Activated CD4-positive, alpha-beta T cell treated with anti-CD3 and anti-CD28 coated beads for 36 hours (primary cell): ENCODE measurements at regions of chr10 and their contacts with region 1.

Region 1: DNA sequence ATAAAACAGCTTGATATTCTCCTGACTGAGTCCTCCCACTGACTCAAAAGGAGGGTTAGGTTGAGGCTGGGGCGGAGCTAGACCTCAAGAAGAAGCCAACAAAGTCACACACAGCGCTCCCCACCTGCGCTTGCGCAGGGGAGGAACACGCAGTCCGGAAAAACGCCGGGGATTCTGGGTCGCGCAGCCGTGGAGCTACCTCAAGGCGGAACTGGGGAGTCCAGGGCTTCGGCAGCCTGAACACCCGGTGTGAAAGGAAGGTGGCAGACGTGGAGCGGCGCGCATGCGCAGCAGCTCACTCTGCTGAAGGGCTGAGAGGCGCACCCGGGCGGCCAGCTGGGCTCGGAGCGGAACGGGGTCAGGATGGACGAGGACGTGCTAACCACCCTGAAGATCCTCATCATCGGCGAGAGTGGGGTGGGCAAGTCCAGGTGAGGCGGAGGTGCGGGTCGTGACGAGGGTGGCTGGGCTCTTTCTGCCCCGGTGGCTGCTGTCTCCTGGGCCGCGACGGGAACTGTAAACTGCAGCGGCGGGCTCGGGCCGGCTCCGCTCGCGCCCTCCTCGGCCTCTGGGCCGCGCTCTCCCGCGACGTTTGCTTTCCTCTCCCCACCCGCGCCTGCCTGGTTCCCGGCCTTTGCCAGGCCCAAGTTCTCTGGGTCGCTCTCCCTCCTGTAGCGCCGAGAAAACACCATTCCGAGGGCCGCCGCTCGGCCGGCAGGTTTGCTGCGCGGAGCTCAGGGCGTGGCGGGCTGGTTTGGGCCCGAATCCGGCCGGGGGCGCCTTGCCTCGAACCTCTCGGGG is at the start of gene RAB18:
- DNase-seq: peak; percentile 99
- ATAC-seq: peak; percentile 98
- H3K4me3 Mint-ChIP-seq: peak within 1 kb of the TSS; percentile 93
- H3K27ac Mint-ChIP-seq: peak within 1 kb of the TSS; percentile 93
- H3K4me1 Mint-ChIP-seq: peaks cover 46% of the 10 kb centered on the region
- H3K27me3 Mint-ChIP-seq: no peaks in the 10 kb centered on the region
- total RNA-seq, gene RAB18: 44.6 to 49.3 TPM

Region 2: GRCh38 chr10:27099916-27100812 is 404.0 kb before region 1 on chr10 and contains the start of gene ANKRD26:
- CTCF ChIA-PET with region 1: no interaction called
- POLR2A ChIA-PET with region 1: no interaction called
- intact Hi-C with region 1: loop called in 1 of 2 experiments (anchors 5 kb)
- DNase-seq: peak; percentile 97
- ATAC-seq: peak; percentile 66
- H3K4me3 Mint-ChIP-seq: peak within 1 kb of the TSS; percentile 84
- H3K27ac Mint-ChIP-seq: peak within 1 kb of the TSS; percentile 93
- H3K4me1 Mint-ChIP-seq: peaks cover 49% of the 10 kb centered on the region
- H3K27me3 Mint-ChIP-seq: no peaks in the 10 kb centered on the region
- total RNA-seq, gene ANKRD26: 10.2 to 13.2 TPM

Region 3: GRCh38 chr10:27664461-27664860 is 160.3 kb after region 1 on chr10:
- CTCF ChIA-PET with region 1: no interaction called
- POLR2A ChIA-PET with region 1: no interaction called
- intact Hi-C with region 1: no loop called
- DNase-seq: no peak
- ATAC-seq: no peak
- H3K4me3 Mint-ChIP-seq: no peak overlapping the region
- H3K27ac Mint-ChIP-seq: no peak overlapping the region
- H3K4me1 Mint-ChIP-seq: no peaks in the 10 kb centered on the region
- H3K27me3 Mint-ChIP-seq: peaks cover 24% of the 10 kb centered on the region

Region 4: GRCh38 chr10:28302638-28303488 is 798.7 kb after region 1 on chr10 and contains the start of gene MPP7:
- CTCF ChIA-PET with region 1: no interaction called
- POLR2A ChIA-PET with region 1: no interaction called
- intact Hi-C with region 1: loop called in 1 of 2 experiments (anchors 1 kb)
- DNase-seq: peak; percentile 97
- ATAC-seq: peak; percentile 97
- H3K4me3 Mint-ChIP-seq: peak within 1 kb of the TSS; percentile 90
- H3K27ac Mint-ChIP-seq: peak within 1 kb of the TSS; percentile 80
- H3K4me1 Mint-ChIP-seq: peaks cover 49% of the 10 kb centered on the region
- H3K27me3 Mint-ChIP-seq: no peaks in the 10 kb centered on the region
- total RNA-seq, gene MPP7: 10.9 to 11.0 TPM

Region 5: DNA sequence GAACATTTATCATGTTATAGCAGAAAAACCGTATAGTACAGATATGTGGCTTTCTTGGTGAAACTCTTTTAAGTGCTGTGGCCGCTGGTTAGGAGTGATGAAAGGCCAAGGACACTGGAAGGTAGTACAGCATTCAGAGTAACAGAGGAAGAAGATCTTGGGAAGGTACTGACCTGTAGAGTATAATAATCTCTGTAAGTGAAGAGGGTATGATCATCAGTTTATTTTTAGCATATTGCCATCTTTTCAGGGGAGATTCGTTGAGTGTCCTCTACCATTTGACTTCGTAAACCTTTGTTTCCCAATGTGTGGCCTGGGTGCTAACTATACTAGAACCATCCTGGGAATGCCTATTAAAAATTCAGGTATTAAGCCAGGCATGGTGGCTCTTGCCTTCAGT is 1073.3 kb after region 1 on chr10:
- CTCF ChIA-PET with region 1: no interaction called
- POLR2A ChIA-PET with region 1: no interaction called
- intact Hi-C with region 1: no loop called
- DNase-seq: no peak
- ATAC-seq: no peak
- H3K4me3 Mint-ChIP-seq: no peak overlapping the region
- H3K27ac Mint-ChIP-seq: no peak overlapping the region
- H3K4me1 Mint-ChIP-seq: peaks cover 86% of the 10 kb centered on the region
- H3K27me3 Mint-ChIP-seq: no peaks in the 10 kb centered on the region